ENCODE measurements at regions of chr5 and their contacts with region 1.

Region 1: GRCh38 chr5:66807743-66808142 is 211.6 kb downstream of the MAST4 start:
- DNase-seq: peak; percentile 80
- H3K4me3 ChIP-seq: no peak overlapping the region
- H3K27ac ChIP-seq: no peak overlapping the region
- H3K4me1 ChIP-seq: peaks cover 11% of the 10 kb centered on the region
- H3K27me3 ChIP-seq: no peaks in the 10 kb centered on the region
- CTCF ChIP-seq: peak; percentile 62 to 75

Region 2: DNA sequence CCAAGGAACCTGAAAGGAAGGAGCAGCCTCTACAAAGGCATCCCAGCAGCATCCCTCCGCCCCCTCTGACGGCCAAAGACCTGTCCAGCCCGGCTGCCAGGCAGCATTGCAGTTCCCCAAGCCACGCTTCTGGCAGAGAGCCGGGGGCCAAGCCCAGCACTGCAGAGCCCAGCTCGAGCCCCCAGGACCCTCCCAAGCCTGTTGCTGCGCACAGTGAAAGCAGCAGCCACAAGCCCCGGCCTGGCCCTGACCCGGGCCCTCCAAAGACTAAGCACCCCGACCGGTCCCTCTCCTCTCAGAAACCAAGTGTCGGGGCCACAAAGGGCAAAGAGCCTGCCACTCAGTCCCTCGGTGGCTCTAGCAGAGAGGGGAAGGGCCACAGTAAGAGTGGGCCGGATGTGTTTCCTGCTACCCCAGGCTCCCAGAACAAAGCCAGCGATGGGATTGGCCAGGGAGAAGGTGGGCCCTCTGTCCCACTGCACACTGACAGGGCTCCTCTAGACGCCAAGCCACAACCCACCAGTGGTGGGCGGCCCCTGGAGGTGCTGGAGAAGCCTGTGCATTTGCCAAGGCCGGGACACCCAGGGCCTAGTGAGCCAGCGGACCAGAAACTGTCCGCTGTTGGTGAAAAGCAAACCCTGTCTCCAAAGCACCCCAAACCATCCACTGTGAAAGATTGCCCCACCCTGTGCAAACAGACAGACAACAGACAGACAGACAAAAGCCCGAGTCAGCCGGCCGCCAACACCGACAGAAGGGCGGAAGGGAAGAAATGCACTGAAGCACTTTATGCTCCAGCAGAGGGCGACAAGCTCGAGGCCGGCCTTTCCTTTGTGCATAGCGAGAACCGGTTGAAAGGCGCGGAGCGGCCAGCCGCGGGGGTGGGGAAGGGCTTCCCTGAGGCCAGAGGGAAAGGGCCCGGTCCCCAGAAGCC is 358.1 kb after region 1 on chr5:
- CTCF ChIA-PET with region 1: no interaction called
- dilution Hi-C with region 1: no loop called
- in situ Hi-C with region 1: no loop called
- intact Hi-C with region 1: loop called (anchors 5 kb)
- DNase-seq: peak; percentile 82
- H3K4me3 ChIP-seq: no peak overlapping the region
- H3K27ac ChIP-seq: peak overlapping the region; percentile 65
- H3K4me1 ChIP-seq: peaks cover 40% of the 10 kb centered on the region
- H3K27me3 ChIP-seq: no peaks in the 10 kb centered on the region
- CTCF ChIP-seq: peak; percentile 71 to 88

Region 3: DNA sequence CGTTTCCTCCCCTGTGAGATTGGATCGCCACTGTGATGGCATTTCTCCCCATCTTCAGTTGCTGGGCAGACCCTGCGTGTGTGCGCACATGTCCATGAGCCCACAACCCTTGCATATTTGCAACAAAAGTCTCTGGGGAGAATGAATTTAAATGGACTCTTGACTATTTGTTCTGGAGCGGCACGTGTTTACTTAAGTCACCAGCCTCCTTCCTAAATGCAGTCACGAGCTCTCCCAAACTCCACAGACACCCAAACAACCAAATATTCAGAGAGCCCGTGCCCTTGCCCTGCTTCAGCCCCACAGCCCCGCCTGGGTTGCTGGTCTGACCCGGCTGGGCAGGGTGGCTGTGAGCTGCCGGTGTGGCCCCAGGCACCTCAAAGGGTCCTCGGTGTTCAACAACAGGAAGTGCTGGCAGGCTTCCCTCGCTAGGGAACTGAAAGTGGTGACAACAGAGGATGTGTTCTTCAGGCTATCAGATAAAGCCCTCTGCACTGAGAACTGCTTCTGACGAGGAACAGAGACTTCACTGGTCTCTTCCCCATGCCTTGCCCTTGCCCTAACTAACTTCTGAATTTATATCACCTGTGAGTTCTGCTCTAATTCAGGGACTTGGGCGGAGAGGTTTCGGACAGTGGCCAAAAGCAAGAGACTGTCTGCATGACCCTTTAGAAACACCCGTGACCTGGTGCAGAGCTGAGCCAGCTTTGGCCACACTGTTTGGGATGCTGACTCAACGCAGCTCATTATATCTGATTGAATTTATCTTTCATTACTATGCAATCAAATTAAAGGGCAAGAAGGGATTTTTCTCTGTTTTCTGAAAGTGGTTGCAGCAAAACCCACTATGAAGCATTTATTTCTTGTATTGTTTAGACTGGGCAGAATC is 408.1 kb after region 1 on chr5:
- CTCF ChIA-PET with region 1: no interaction called
- dilution Hi-C with region 1: no loop called
- in situ Hi-C with region 1: loop called in 1 of 2 experiments (anchors 10 kb)
- intact Hi-C with region 1: no loop called
- DNase-seq: no peak
- H3K4me3 ChIP-seq: no peak overlapping the region
- H3K27ac ChIP-seq: no peak overlapping the region
- H3K4me1 ChIP-seq: peaks cover 26% of the 10 kb centered on the region
- H3K27me3 ChIP-seq: no peaks in the 10 kb centered on the region
- CTCF ChIP-seq: no peak

Region 4: DNA sequence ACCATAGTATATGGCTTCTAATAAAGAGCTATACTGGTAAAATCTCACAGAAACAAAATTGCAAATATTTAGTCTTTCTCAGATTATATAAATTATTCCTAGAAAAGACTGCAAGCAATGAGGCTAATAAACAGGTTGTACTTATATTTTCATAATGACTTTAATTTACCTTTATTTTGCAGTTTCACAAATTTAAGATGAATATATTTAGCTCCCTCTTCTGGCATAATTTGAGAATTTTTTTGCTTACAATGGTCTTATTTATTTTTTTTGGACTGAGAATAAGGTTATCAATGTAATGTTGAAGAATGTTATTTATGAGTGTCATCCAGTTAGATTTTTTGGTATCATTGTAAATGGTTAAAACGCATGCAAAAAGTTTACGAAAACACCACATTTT is 1464.5 kb after region 1 on chr5:
- CTCF ChIA-PET with region 1: no interaction called
- dilution Hi-C with region 1: no loop called
- in situ Hi-C with region 1: no loop called
- intact Hi-C with region 1: loop called (anchors 10 kb)
- DNase-seq: no peak
- H3K4me3 ChIP-seq: no peak overlapping the region
- H3K27ac ChIP-seq: no peak overlapping the region
- H3K4me1 ChIP-seq: peaks cover 63% of the 10 kb centered on the region
- H3K27me3 ChIP-seq: no peaks in the 10 kb centered on the region
- CTCF ChIP-seq: peak; percentile 22 to 27

Measured in mammary epithelial cell (primary cell).